Activated CD4-positive, alpha-beta T cell treated with anti-CD3 and anti-CD28 coated beads for 36 hours (primary cell): ENCODE measurements at regions of chrX and their contacts with region 1.

Region 1: GRCh38 chrX:63350941-63351616 is at the start of gene SPIN4:
- DNase-seq: peak; percentile 80
- ATAC-seq: peak; percentile 92
- H3K4me3 Mint-ChIP-seq: peak within 1 kb of the TSS; percentile 83
- H3K27ac Mint-ChIP-seq: peak within 1 kb of the TSS; percentile 72
- H3K4me1 Mint-ChIP-seq: peaks cover 14% of the 10 kb centered on the region
- H3K27me3 Mint-ChIP-seq: no peaks in the 10 kb centered on the region
- total RNA-seq, gene SPIN4: 3.3 TPM

Region 2: GRCh38 chrX:63418211-63418610 is 67.1 kb after region 1 on chrX:
- CTCF ChIA-PET with region 1: no interaction called
- POLR2A ChIA-PET with region 1: no interaction called
- intact Hi-C with region 1: loop called in 1 of 2 experiments (anchors 10 kb)
- DNase-seq: no peak
- ATAC-seq: no peak
- H3K4me3 Mint-ChIP-seq: no peak overlapping the region
- H3K27ac Mint-ChIP-seq: no peak overlapping the region
- H3K4me1 Mint-ChIP-seq: no peaks in the 10 kb centered on the region
- H3K27me3 Mint-ChIP-seq: no peaks in the 10 kb centered on the region

Region 3: DNA sequence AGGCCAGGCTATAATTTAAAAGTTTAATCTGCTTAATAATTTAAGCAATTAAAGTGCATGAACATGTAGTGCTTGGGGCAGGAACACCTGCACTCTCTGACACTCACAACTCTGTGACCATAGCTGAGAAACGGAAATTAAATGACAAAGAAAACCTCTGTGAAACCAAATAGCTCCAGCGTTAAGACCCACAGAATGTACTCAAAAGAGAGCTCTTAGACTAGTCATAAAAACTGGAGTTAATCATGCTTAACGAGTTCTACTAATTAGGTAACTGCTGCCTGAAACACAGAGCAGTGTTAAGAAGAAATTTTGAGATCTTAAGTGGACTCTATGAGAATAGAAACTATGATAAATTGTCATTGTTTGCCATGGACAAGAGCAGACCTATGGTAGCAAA is 174.4 kb after region 1 on chrX:
- CTCF ChIA-PET with region 1: no interaction called
- POLR2A ChIA-PET with region 1: no interaction called
- intact Hi-C with region 1: no loop called
- DNase-seq: no peak
- ATAC-seq: no peak
- H3K4me3 Mint-ChIP-seq: no peak overlapping the region
- H3K27ac Mint-ChIP-seq: no peak overlapping the region
- H3K4me1 Mint-ChIP-seq: peaks cover under 1% of the 10 kb centered on the region
- H3K27me3 Mint-ChIP-seq: no peaks in the 10 kb centered on the region

Region 4: DNA sequence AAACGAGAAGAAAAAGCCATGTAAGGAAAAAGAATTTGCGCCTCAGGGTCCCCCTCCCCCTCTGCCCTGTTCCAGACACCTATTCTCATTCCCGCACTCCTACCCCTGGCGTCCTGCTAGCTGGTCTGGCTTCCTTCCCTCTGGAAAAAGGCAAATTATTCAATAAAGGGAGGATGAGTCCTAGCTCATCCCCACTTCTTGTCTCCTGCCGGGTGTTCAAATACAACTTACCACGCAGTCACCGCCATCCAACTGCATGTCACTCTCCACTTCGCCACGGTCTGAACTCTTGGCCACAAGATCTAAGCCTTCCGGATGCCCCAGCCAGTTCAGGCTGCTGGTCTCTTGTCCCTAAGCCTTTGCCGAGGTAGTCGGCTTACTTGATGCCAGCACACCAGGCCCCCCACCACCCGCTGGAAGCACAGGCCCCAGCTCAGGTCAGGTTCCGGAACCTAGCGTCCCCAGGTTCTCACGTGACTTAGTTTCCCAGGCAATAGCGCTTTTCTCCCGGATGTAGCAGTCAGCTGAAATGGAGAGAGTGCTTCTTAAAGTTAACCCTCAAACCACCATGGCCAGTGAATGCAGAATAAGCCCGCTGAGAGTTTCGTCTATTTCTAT is 209.6 kb after region 1 on chrX:
- CTCF ChIA-PET with region 1: no interaction called
- POLR2A ChIA-PET with region 1: no interaction called
- intact Hi-C with region 1: loop called (anchors 5 kb)
- DNase-seq: peak; percentile 70
- ATAC-seq: peak; percentile 94
- H3K4me3 Mint-ChIP-seq: peak overlapping the region; percentile 95
- H3K27ac Mint-ChIP-seq: peak overlapping the region; percentile 92
- H3K4me1 Mint-ChIP-seq: peaks cover 16% of the 10 kb centered on the region
- H3K27me3 Mint-ChIP-seq: no peaks in the 10 kb centered on the region